K562 (cell line): ENCODE measurements at regions of chr7 and their contacts with region 1.

Region 1: GRCh38 chr7:114026486-114027089 is 107.8 kb upstream of the PPP1R3A start:
- DNase-seq: peak; percentile 50 to 80 (median 59)
- ATAC-seq: peak; percentile 76
- H3K4me3 ChIP-seq: no peak overlapping the region
- H3K27ac ChIP-seq: no peak overlapping the region
- H3K4me1 ChIP-seq: no peaks in the 10 kb centered on the region
- H3K27me3 ChIP-seq: no peaks in the 10 kb centered on the region
- CTCF ChIP-seq: peak in 2 of 3 experiments; percentile 32 to 84; a peak in 4 of 6 replicates
- EP300 ChIP-seq: no peak
- POLR2A ChIP-seq: no peak
- RAD21 ChIP-seq: peak; percentile 83 to 86

Region 2: GRCh38 chr7:114051871-114052331 is 25.3 kb after region 1 on chr7:
- CTCF ChIA-PET with region 1: no interaction called
- POLR2A ChIA-PET with region 1: no interaction called
- in situ Hi-C with region 1: no loop called
- intact Hi-C with region 1: no loop called
- DNase-seq: no peak
- ATAC-seq: no peak
- H3K4me3 ChIP-seq: no peak overlapping the region
- H3K27ac ChIP-seq: no peak overlapping the region
- H3K4me1 ChIP-seq: no peaks in the 10 kb centered on the region
- H3K27me3 ChIP-seq: no peaks in the 10 kb centered on the region
- CTCF ChIP-seq: no peak
- EP300 ChIP-seq: no peak
- POLR2A ChIP-seq: no peak
- RAD21 ChIP-seq: no peak

Region 3: GRCh38 chr7:114481995-114482394 is 455.4 kb after region 1 on chr7:
- CTCF ChIA-PET with region 1: no interaction called
- POLR2A ChIA-PET with region 1: no interaction called
- in situ Hi-C with region 1: no loop called
- intact Hi-C with region 1: no loop called
- DNase-seq: no peak
- ATAC-seq: no peak
- H3K4me3 ChIP-seq: no peak overlapping the region
- H3K27ac ChIP-seq: no peak overlapping the region
- H3K4me1 ChIP-seq: no peaks in the 10 kb centered on the region
- H3K27me3 ChIP-seq: no peaks in the 10 kb centered on the region
- CTCF ChIP-seq: no peak
- EP300 ChIP-seq: no peak
- POLR2A ChIP-seq: no peak
- RAD21 ChIP-seq: no peak

Region 4: DNA sequence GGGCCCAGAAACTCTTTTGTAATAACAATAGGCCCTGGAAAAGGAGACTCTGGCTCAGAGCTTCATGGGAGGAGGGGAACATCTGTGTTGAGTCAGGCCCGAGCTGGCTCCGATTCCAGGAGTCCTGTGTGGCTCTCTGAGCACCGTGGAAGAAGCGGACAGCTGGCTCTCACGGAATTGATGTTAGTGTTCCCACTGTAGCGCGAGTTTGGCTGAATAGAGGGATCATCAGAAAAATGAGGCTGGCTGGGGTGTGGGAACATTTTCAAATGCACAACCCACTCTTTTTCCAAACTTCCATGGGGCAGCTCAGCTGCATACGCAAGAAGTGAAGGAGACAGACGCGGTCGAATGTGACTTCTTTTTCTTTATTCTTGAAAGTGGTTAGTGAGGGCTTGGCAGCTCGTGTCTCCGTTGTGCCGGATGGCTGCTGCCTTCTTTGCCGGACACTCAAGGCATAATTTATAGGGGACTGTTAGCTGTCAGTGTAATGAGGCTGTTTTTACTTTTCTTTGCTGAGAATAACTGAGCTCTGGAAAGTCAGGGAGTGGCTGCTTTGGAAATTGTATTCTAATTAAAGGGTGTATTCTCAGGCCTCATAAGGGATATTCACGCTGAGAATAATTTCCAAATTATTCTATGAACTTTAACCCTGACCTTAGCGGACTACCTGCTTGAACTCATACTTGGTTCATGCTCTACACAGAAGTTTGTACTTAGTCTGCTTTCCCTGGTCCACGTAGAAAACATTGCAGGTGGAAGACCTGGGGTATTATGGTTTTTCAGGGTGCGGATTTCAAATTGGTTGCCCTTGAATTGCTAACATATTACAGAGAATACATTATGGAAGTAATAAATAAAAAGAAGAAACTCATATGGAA is 918.4 kb after region 1 on chr7:
- CTCF ChIA-PET with region 1: no interaction called
- POLR2A ChIA-PET with region 1: no interaction called
- in situ Hi-C with region 1: no loop called
- intact Hi-C with region 1: loop called (anchors 10 kb)
- DNase-seq: no peak
- ATAC-seq: no peak
- H3K4me3 ChIP-seq: no peak overlapping the region
- H3K27ac ChIP-seq: no peak overlapping the region
- H3K4me1 ChIP-seq: no peaks in the 10 kb centered on the region
- H3K27me3 ChIP-seq: no peaks in the 10 kb centered on the region
- CTCF ChIP-seq: no peak
- EP300 ChIP-seq: no peak
- POLR2A ChIP-seq: no peak
- RAD21 ChIP-seq: no peak

Region 5: DNA sequence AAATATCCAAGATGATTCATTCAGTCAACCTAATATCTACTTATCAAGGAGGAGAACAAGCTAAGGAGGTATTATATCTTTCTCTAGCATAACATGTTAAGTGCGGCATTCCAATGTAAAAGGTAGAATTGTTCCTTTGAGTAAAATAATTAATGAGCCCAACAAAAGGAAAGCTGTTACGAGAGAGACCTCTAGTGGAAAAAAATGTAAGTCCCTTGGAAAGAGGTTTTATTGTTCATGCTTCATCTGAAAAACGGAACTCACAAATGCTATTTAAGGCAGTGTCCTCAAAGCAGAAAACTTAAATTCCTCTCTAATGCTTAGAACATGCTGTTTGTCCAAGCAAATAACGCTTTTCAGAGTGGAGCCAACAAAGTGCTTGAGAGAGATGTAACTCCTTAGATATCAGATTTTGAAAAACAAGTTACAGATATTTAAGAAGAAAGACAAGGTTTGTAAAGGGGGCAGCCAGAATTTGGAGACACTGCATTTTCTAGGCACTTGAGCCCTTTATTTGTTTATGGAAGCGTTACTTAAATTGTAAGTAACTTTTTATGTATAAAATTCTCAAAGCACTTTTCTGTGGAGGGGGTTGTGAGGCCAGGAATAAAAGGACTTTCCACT is 1884.1 kb after region 1 on chr7:
- CTCF ChIA-PET with region 1: no interaction called
- POLR2A ChIA-PET with region 1: no interaction called
- in situ Hi-C with region 1: no loop called
- intact Hi-C with region 1: loop called (anchors 5 kb)
- DNase-seq: peak in 1 of 4 experiments; percentile 9
- ATAC-seq: no peak
- H3K4me3 ChIP-seq: no peak overlapping the region
- H3K27ac ChIP-seq: no peak overlapping the region
- H3K4me1 ChIP-seq: no peaks in the 10 kb centered on the region
- H3K27me3 ChIP-seq: no peaks in the 10 kb centered on the region
- CTCF ChIP-seq: peak in 2 of 3 experiments; percentile 25 to 40; a peak in 2 of 6 replicates
- EP300 ChIP-seq: no peak
- POLR2A ChIP-seq: no peak
- RAD21 ChIP-seq: peak; percentile 59 to 73; a peak in 3 of 4 replicates